ENCODE measurements at regions of chr3 and their contacts with region 1.

Region 1: DNA sequence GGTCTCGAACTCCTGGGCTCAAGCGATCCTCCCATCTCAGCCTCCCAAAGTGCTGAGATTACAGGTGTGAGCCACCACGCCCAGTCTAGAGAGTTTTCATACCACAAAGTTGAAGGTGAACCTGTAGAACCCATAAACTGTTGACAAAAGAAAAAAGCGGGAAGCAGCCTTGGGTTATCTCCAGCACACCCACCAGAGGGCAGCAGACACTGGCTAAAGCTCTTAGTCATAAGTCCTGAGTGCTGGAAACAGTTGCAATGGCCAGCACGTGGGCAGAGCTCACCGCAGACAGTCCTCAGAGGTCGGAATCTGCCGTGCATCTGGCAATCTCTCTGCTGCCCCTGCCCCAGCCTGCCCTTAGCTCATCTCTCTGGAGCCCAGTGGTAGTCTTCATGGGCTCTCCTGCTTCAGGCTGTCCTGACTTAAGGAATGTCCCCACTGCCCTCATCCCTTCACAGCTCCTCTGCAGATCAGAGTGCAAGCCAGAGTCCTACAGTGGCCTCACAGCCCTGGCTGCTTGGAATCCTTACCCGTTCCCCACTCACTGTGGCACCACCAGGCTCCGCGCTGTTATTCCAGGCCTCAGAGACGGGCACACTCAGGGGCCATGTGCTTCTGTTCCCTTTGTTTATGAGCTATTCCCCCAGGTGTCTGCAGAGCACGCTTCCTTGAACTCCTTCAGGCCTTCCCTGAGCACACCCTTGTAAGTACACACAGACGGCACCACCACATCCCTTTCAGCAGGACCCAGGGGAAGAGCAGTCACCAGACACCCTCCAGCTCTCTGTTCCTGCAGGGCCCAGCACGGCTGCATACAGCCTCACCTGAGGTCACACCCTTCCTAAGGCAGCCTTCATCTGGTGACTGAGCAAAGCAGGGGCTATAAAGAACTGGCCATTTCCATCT is 8.8 kb upstream of the ELP6 start:
- DNase-seq: peak; percentile 77 to 92 (median 87)
- H3K4me3 ChIP-seq: no peak overlapping the region
- H3K4me3 Mint-ChIP-seq: no peak overlapping the region
- H3K27ac ChIP-seq: no peak overlapping the region
- H3K27ac Mint-ChIP-seq: peak overlapping the region in 1 of 7 donors; percentile 67
- H3K4me1 ChIP-seq: peaks cover 4 to 8% of the 10 kb centered on the region in 2 donors
- H3K4me1 Mint-ChIP-seq: peaks cover 16% of the 10 kb centered on the region
- H3K27me3 ChIP-seq: no peaks in the 10 kb centered on the region
- H3K27me3 Mint-ChIP-seq: peaks cover 0 to 5% (median 0%) of the 10 kb centered on the region in 3 donors
- CTCF ChIP-seq: peak; percentile 80

Region 2: DNA sequence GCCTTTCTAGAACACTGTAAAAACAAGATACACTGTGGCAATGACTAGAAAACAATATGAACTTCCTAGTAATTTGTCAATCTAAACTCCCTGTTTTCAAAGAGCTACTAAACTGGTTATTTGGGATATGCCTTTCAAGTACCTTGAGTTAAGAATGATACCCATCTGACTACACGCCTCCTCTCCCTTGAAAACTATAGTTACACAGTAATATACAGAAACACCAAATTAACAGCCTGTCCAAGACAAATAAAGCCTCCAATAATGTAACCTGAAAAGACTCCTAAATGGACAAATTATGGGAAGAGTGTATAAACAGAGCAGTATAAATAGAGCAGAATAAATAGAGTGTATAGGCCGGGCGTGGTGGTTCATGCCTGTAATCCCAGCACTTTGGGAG is 189.3 kb after region 1 on chr3:
- intact Hi-C with region 1: no loop called
- DNase-seq: no peak
- H3K4me3 ChIP-seq: no peak overlapping the region
- H3K4me3 Mint-ChIP-seq: no peak overlapping the region
- H3K27ac ChIP-seq: no peak overlapping the region
- H3K27ac Mint-ChIP-seq: peak overlapping the region in 1 of 7 donors; percentile 75
- H3K4me1 ChIP-seq: no peaks in the 10 kb centered on the region
- H3K4me1 Mint-ChIP-seq: no peaks in the 10 kb centered on the region
- H3K27me3 ChIP-seq: no peaks in the 10 kb centered on the region
- H3K27me3 Mint-ChIP-seq: no peaks in the 10 kb centered on the region
- CTCF ChIP-seq: no peak

Region 3: GRCh38 chr3:47791193-47791855 is 269.0 kb after region 1 on chr3:
- intact Hi-C with region 1: loop called (anchors 2 kb)
- DNase-seq: no peak
- H3K4me3 ChIP-seq: no peak overlapping the region
- H3K4me3 Mint-ChIP-seq: no peak overlapping the region
- H3K27ac ChIP-seq: no peak overlapping the region
- H3K27ac Mint-ChIP-seq: no peak overlapping the region
- H3K4me1 ChIP-seq: peaks cover 4 to 6% of the 10 kb centered on the region in 2 donors
- H3K4me1 Mint-ChIP-seq: peaks cover 4% of the 10 kb centered on the region
- H3K27me3 ChIP-seq: no peaks in the 10 kb centered on the region
- H3K27me3 Mint-ChIP-seq: peaks cover 0 to 4% (median 3%) of the 10 kb centered on the region in 3 donors
- CTCF ChIP-seq: no peak

Region 4: GRCh38 chr3:47802734-47803477 is 280.6 kb after region 1 on chr3 and contains the start of gene DHX30:
- intact Hi-C with region 1: loop called in 1 of 2 experiments (anchors 5 kb)
- DNase-seq: peak; percentile 60 to 76 (median 69)
- H3K4me3 ChIP-seq: peak within 1 kb of the TSS; percentile 65 to 91 (median 87)
- H3K4me3 Mint-ChIP-seq: peak within 1 kb of the TSS; percentile 88 to 94
- H3K27ac ChIP-seq: peak within 1 kb of the TSS; percentile 58 to 83
- H3K27ac Mint-ChIP-seq: peak within 1 kb of the TSS; percentile 77 to 93 (median 87)
- H3K4me1 ChIP-seq: peaks cover 13 to 17% of the 10 kb centered on the region in 2 donors
- H3K4me1 Mint-ChIP-seq: peaks cover 21% of the 10 kb centered on the region
- H3K27me3 ChIP-seq: no peaks in the 10 kb centered on the region
- H3K27me3 Mint-ChIP-seq: peaks cover 0 to 4% (median 1%) of the 10 kb centered on the region in 3 donors
- CTCF ChIP-seq: no peak
- polyA plus RNA-seq, gene DHX30: 19.4 to 43.9 (median 20.1) TPM